Activated T-helper 1 cell treated with anti-CD3 and anti-CD28 coated beads, Interleukin-12 subunit alpha, Interleukin-12 subunit beta, Interleukin-2, Interleukin-4 antibody, amounts not matched to agents 30 ng/mL and 10 ng/mL and 1 ng/mL, durations not matched to agents 14 hours and 24 hours and 36 hours (primary cell): ENCODE measurements at regions of chrX and their contacts with region 1.

Region 1: GRCh38 chrX:41116948-41117347 is 31.7 kb downstream of the USP9X start:
- DNase-seq: peak; percentile 11
- H3K4me3 Mint-ChIP-seq: peak overlapping the region; percentile 66
- H3K27ac Mint-ChIP-seq: peak overlapping the region; percentile 79
- H3K4me1 Mint-ChIP-seq: peaks cover 61% of the 10 kb centered on the region
- H3K27me3 Mint-ChIP-seq: no peaks in the 10 kb centered on the region

Region 2: GRCh38 chrX:40735325-40736169 is 381.4 kb before region 1 on chrX and contains the start of gene MED14:
- intact Hi-C with region 1: loop called (anchors 1 kb)
- DNase-seq: peak; percentile 82
- H3K4me3 Mint-ChIP-seq: peak within 1 kb of the TSS; percentile 87
- H3K27ac Mint-ChIP-seq: peak within 1 kb of the TSS; percentile 90
- H3K4me1 Mint-ChIP-seq: peaks cover 30% of the 10 kb centered on the region
- H3K27me3 Mint-ChIP-seq: no peaks in the 10 kb centered on the region
- total RNA-seq, gene MED14: 36.4 and 40.9 TPM in 2 replicates

Region 3: GRCh38 chrX:40792433-40792832 is 324.5 kb before region 1 on chrX:
- intact Hi-C with region 1: loop called (anchors 10 kb)
- DNase-seq: no peak
- H3K4me3 Mint-ChIP-seq: no peak overlapping the region
- H3K27ac Mint-ChIP-seq: no peak overlapping the region
- H3K4me1 Mint-ChIP-seq: no peaks in the 10 kb centered on the region
- H3K27me3 Mint-ChIP-seq: no peaks in the 10 kb centered on the region

Region 4: DNA sequence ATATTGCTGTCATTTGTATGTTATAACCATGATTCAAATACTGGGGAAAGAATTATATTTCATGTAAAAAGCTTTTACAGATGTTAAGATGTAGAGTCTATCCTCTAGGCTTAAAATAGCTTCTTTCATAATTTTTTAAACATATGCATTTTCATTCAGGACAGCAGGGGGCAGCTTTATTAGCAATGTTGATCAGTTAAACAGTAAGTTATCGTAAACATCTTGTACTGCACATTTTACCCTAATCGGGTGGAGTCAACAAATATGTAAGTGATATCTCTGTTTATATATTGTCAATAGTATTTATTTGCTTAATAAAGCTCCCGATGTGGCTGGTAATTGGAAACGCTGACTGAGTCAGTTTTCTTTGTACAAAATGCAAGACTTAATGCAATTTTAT is 239.1 kb before region 1 on chrX:
- intact Hi-C with region 1: loop called (anchors 1 kb)
- DNase-seq: no peak
- H3K4me3 Mint-ChIP-seq: no peak overlapping the region
- H3K27ac Mint-ChIP-seq: no peak overlapping the region
- H3K4me1 Mint-ChIP-seq: no peaks in the 10 kb centered on the region
- H3K27me3 Mint-ChIP-seq: peaks cover 2% of the 10 kb centered on the region

Region 5: GRCh38 chrX:40933132-40933705 is 183.7 kb before region 1 on chrX:
- intact Hi-C with region 1: loop called (anchors 1 kb)
- DNase-seq: peak; percentile 2
- H3K4me3 Mint-ChIP-seq: peak overlapping the region; percentile 67
- H3K27ac Mint-ChIP-seq: peak overlapping the region; percentile 95
- H3K4me1 Mint-ChIP-seq: peaks cover 15% of the 10 kb centered on the region
- H3K27me3 Mint-ChIP-seq: peaks cover 1% of the 10 kb centered on the region

Region 6: GRCh38 chrX:41010188-41010846 is 106.6 kb before region 1 on chrX:
- intact Hi-C with region 1: loop called (anchors 5 kb)
- DNase-seq: peak; percentile 53
- H3K4me3 Mint-ChIP-seq: peak overlapping the region; percentile 76
- H3K27ac Mint-ChIP-seq: peak overlapping the region; percentile 86
- H3K4me1 Mint-ChIP-seq: peaks cover 24% of the 10 kb centered on the region
- H3K27me3 Mint-ChIP-seq: no peaks in the 10 kb centered on the region